ENCODE measurements at regions of chrX and their contacts with region 1.

Region 1: DNA sequence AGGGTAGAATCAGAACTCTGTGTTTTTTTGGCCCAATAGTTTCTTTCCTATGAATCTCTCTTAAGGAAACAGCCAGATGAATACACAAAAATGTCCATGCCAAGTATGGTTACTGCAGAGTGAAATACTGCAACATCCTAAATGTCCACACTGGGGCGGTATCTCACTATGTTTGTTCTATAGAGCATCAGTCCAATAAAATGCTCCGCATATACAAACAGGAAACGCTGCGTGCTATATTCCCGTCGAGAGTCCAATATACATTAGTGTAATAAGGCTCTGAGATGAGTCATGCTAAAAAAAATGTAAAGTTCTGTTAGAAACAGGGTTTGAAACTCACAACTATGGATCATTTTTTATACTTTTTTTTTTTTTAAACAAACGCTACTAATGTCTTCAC is 72.9 kb upstream of the ENOX2 start:
- DNase-seq: peak; percentile 39
- H3K4me3 ChIP-seq: no peak overlapping the region; a peak in 1 of 4 replicates
- H3K27ac ChIP-seq: no peak overlapping the region
- H3K4me1 ChIP-seq: no peaks in the 10 kb centered on the region; a peak in 1 of 4 replicates
- H3K27me3 ChIP-seq: peaks cover 6% of the 10 kb centered on the region; the same call in 1 of the 2 replicates
- CTCF ChIP-seq: peak; percentile 82
- EP300 ChIP-seq: no peak
- RAD21 ChIP-seq: peak; percentile 85

Region 2: GRCh38 chrX:131139072-131139471 is 163.1 kb after region 1 on chrX:
- CTCF ChIA-PET with region 1: no interaction called
- POLR2A ChIA-PET with region 1: no interaction called
- DNase-seq: no peak
- H3K4me3 ChIP-seq: no peak overlapping the region
- H3K27ac ChIP-seq: no peak overlapping the region
- H3K4me1 ChIP-seq: no peaks in the 10 kb centered on the region
- H3K27me3 ChIP-seq: no peaks in the 10 kb centered on the region
- CTCF ChIP-seq: no peak
- EP300 ChIP-seq: no peak
- RAD21 ChIP-seq: no peak

Region 3: DNA sequence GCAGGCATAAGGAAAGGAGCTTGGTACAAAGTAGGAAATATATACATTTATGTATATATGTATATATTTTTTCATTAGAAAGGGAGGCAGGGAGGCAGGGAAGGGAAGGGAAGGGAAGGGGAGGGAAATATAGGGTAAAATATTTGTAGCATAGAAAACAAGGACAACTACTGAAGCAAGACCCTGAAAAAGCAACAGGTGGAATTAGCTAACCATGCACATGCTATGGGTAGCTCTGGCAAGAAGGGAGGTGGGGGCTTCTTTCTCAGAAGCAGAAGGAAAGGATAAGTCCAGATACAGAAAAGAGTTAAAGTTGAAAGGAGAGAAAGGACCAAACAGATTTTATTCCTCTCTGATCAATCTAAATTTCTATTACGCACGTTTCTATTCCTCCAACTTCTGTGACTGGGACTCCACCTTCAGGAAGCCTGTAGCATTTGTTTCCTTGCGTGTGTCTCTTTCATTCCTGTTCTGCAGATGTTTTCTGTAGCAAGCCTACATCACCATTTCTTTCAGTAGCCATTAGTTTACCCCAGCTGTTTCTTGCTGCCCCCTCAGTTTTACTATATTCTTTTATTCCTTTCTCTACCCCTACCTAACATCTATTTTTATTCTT is 650.8 kb after region 1 on chrX:
- CTCF ChIA-PET with region 1: interaction called, 13 read pairs
- POLR2A ChIA-PET with region 1: no interaction called
- DNase-seq: peak; percentile 4
- H3K4me3 ChIP-seq: no peak overlapping the region
- H3K27ac ChIP-seq: no peak overlapping the region
- H3K4me1 ChIP-seq: no peaks in the 10 kb centered on the region
- H3K27me3 ChIP-seq: no peaks in the 10 kb centered on the region
- CTCF ChIP-seq: peak; percentile 62
- EP300 ChIP-seq: no peak
- RAD21 ChIP-seq: peak; percentile 73

Region 4: DNA sequence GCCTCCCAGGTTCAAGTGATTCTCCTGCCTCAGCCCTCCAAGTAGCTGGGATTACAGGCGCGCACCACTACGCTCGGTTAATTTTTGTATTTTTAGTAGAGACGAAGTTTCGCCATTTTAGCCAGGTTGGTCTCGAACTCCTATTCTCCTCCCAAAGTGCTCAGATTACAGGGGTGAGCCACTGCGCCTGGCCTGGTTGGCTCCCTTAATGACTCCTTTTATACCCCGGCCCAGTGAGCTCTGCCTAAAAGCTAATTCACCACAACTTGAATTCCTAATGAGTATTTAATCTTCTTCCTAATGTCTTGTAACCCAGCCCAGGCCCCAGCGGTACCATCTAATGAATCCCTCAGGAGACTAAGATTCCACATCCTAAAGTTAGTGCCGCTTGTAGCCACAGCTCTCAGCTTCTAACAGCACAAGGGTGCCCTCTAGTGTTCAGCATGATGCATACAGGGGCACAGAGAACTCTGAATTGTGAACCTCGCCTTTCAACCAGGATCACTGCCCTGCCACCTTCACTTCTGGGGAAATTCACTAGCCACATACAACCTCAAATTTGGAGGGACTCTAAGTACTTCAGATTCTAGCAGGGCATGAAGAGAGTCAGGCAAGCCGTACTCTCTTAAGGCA is 657.5 kb after region 1 on chrX:
- CTCF ChIA-PET with region 1: interaction called, 11 read pairs
- POLR2A ChIA-PET with region 1: no interaction called
- DNase-seq: peak; percentile 51
- H3K4me3 ChIP-seq: 0 out of 4 replicates have a peak overlapping the region, but pooled peaks of 1 of the 2 experiments have one; percentile 28
- H3K27ac ChIP-seq: no peak overlapping the region
- H3K4me1 ChIP-seq: no peaks in the 10 kb centered on the region
- H3K27me3 ChIP-seq: no peaks in the 10 kb centered on the region
- CTCF ChIP-seq: peak; percentile 94
- EP300 ChIP-seq: no peak
- RAD21 ChIP-seq: peak; percentile 92

Region 5: GRCh38 chrX:131677655-131678628 is 702.0 kb after region 1 on chrX:
- CTCF ChIA-PET with region 1: interaction called, 21 read pairs
- POLR2A ChIA-PET with region 1: no interaction called
- DNase-seq: peak; percentile 74
- H3K4me3 ChIP-seq: no peak overlapping the region
- H3K27ac ChIP-seq: no peak overlapping the region
- H3K4me1 ChIP-seq: no peaks in the 10 kb centered on the region; a peak in 1 of 4 replicates
- H3K27me3 ChIP-seq: peaks cover 4% of the 10 kb centered on the region; the same call in 1 of the 2 replicates
- CTCF ChIP-seq: peak; percentile 78
- EP300 ChIP-seq: no peak
- RAD21 ChIP-seq: peak; percentile 76